Activated T-helper 1 cell treated with anti-CD3 and anti-CD28 coated beads, Interleukin-12 subunit alpha, Interleukin-12 subunit beta, Interleukin-2, Interleukin-4 antibody, amounts not matched to agents 30 ng/mL and 10 ng/mL and 1 ng/mL, durations not matched to agents 14 hours and 24 hours and 36 hours (primary cell): ENCODE measurements at regions of chr3 and their contacts with region 1.

Region 1: DNA sequence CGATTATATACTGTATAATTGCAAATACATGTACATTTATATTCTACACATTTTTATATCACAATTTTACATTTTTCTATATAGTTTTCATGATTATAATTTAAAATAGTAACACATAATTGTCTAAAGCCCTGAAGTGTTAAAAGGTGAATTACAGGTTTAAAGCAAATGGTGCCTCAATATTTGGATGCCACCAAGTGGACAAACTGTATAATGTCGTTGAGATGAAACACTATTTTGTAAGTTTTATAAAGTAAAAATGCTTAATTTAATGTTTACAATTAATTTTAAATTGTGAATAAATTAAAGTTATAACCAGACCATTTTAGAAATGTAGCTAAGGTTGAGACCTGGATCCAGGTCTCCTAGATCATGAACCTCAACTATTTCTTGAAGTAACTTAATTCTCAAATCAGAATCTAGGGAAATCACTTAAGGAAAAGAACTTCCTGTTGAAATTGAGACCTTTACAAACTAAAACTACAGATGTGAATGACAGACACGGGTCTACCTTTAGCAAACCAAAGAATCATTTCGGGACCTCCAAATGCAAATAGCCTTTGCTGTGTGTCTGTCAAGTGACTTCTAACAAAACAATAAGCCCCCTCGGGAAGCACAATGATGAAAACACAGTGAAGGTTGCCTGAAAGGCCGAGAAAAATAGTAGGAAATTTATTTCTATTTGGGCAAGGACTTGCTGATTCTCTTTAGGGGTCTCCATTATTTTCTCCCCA is 37.8 kb downstream of the EHHADH start:
- DNase-seq: no peak
- H3K4me3 Mint-ChIP-seq: no peak overlapping the region
- H3K27ac Mint-ChIP-seq: no peak overlapping the region
- H3K4me1 Mint-ChIP-seq: no peaks in the 10 kb centered on the region
- H3K27me3 Mint-ChIP-seq: no peaks in the 10 kb centered on the region

Region 2: DNA sequence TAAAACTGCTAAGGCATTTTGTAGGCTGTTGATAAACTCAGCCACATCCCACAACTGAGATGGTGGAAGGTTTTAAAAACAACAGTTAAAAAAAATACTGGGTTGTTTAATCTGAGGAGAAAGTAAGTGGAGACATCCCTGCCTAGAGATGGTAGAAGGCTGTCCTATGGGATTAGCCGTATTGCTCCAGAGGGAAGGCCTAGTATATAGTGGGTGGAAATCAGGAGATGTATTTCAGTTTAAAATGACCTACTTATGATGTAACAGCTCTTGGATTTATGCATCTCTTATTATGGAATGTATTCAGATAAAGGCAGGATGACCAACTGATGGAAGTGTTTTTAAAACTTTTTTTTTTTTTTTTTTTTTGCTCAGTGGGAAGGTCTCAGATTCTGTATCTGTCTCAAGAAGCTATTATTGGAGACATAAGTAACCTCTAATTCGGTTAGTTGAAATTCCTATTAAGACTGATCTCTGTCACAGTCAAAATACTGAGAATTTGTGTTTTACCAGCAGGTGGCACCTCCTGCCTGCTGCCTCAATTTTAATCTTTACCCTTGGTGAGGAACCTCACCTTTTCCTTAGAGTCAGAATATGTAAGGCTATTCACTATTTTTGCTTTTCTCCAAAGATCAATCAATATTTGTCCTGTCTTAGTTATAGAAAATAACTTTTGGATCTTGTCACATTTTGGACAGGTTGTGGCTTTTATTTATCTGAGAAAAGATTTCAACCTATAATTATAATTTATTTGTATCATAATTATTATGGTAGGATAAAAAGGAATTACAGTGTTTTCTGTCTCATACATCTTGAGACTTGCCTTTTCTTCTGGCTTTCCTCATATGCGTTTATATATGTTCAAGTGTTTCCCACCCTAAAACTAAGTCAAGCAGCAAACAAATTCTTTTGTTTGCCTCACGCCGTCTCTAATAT is 341.1 kb before region 1 on chr3:
- intact Hi-C with region 1: loop called (anchors 1 kb)
- DNase-seq: no peak
- H3K4me3 Mint-ChIP-seq: no peak overlapping the region
- H3K27ac Mint-ChIP-seq: no peak overlapping the region
- H3K4me1 Mint-ChIP-seq: peaks cover 21% of the 10 kb centered on the region
- H3K27me3 Mint-ChIP-seq: no peaks in the 10 kb centered on the region

Region 3: GRCh38 chr3:185176750-185177359 is 39.2 kb before region 1 on chr3:
- intact Hi-C with region 1: no loop called
- DNase-seq: no peak
- H3K4me3 Mint-ChIP-seq: no peak overlapping the region
- H3K27ac Mint-ChIP-seq: no peak overlapping the region
- H3K4me1 Mint-ChIP-seq: no peaks in the 10 kb centered on the region
- H3K27me3 Mint-ChIP-seq: no peaks in the 10 kb centered on the region

Region 4: DNA sequence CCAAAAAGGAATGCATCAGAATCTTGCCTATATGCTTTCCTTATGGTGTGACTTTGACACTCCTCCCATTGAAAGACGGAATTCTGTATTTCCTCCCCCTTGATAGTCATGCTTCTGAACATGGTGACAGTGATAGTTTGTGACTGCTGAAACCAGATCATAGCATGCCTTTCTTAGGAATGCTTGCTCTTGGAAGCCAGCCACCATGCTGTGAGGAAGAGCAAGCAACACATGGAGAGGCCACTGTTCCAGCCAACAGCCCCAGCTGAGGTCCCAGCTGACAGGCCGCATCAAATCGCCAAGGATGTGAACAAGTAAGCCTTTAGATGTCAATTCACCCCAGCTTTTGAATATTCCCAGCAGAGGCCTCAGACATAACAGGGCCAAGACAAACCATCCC is 508.7 kb after region 1 on chr3:
- intact Hi-C with region 1: no loop called
- DNase-seq: no peak
- H3K4me3 Mint-ChIP-seq: no peak overlapping the region
- H3K27ac Mint-ChIP-seq: no peak overlapping the region
- H3K4me1 Mint-ChIP-seq: no peaks in the 10 kb centered on the region
- H3K27me3 Mint-ChIP-seq: peaks cover 6% of the 10 kb centered on the region

Region 5: GRCh38 chr3:185746470-185746869 is 530.4 kb after region 1 on chr3:
- intact Hi-C with region 1: no loop called
- DNase-seq: no peak
- H3K4me3 Mint-ChIP-seq: no peak overlapping the region
- H3K27ac Mint-ChIP-seq: no peak overlapping the region
- H3K4me1 Mint-ChIP-seq: peaks cover 12% of the 10 kb centered on the region
- H3K27me3 Mint-ChIP-seq: peaks cover 24% of the 10 kb centered on the region